MCF 10A (cell line): ENCODE measurements at regions of chr12 and their contacts with region 1.

Region 1: DNA sequence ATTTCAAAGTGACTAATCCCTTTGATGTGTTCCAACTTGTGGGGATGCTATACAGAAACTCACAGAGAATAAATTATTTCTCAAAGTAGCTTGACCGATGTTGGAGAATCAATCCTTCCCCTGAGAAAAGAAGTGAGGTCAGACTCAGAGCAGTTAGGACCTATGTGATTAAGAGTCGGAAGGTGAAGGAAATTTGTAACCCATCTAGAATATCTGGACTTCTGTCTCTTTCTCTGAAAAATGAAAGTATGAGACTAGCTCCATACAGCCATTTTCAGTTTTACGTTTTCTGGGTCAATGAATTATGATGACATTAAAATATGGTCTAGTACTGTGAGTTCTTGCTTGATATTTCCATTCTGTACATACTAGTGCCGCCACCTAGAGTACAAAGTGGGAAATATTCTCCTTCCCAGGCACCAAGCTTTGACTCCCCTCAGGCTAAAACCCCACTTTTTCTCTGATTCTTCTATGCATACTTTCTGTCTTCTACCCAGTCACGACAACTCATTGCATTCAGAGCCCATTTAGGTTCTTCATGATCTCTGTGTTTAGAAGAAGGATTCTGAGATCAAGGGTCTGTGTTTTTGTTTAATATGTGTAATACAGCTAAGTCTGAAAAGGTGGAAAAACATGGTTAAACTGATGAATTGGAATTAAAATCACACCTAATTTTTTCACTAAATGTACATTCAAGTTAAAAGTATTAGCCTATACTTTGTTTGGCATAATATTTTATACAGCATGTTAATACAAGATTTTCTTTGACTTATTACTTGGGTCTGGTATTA is 6.9 kb upstream of the NTS start:
- DNase-seq: peak; percentile 75
- H3K4me3 Mint-ChIP-seq: peak overlapping the region; percentile 15
- H3K27ac Mint-ChIP-seq: no peak overlapping the region
- H3K4me1 Mint-ChIP-seq: no peaks in the 10 kb centered on the region
- H3K27me3 Mint-ChIP-seq: no peaks in the 10 kb centered on the region
- CTCF ChIP-seq: peak; percentile 86

Region 2: DNA sequence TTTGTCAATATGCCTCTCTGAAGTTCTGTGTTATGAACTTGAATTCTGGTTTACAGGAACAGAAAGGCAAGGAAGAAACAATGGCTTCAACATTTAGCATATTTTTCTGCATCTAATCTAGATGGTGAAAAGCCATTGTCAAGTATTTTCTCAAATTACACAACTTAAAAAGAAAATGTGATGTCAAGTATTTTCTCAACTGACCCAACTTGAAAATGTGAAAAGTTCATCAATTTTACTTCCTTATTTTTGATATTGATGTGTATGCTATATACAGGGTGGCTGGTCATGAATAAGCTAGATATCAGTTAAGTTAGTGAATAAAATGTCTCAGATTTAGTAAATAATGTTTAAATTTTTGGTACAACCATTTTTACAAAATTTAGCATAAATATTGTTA is 390.4 kb before region 1 on chr12:
- CTCF ChIA-PET with region 1: interaction called, 51 read pairs
- POLR2A ChIA-PET with region 1: interaction called, 4 read pairs
- intact Hi-C with region 1: loop called (anchors 1 kb)
- DNase-seq: no peak
- H3K4me3 Mint-ChIP-seq: no peak overlapping the region
- H3K27ac Mint-ChIP-seq: no peak overlapping the region
- H3K4me1 Mint-ChIP-seq: no peaks in the 10 kb centered on the region
- H3K27me3 Mint-ChIP-seq: no peaks in the 10 kb centered on the region
- CTCF ChIP-seq: no peak

Region 3: GRCh38 chr12:85575120-85576096 is 291.8 kb before region 1 on chr12:
- CTCF ChIA-PET with region 1: interaction called, 204 read pairs
- POLR2A ChIA-PET with region 1: interaction called, 10 read pairs
- intact Hi-C with region 1: loop called (anchors 1 kb)
- DNase-seq: peak; percentile 79
- H3K4me3 Mint-ChIP-seq: no peak overlapping the region
- H3K27ac Mint-ChIP-seq: no peak overlapping the region
- H3K4me1 Mint-ChIP-seq: no peaks in the 10 kb centered on the region
- H3K27me3 Mint-ChIP-seq: no peaks in the 10 kb centered on the region
- CTCF ChIP-seq: peak; percentile 66

Region 4: GRCh38 chr12:85610194-85610593 is 257.0 kb before region 1 on chr12:
- CTCF ChIA-PET with region 1: no interaction called
- POLR2A ChIA-PET with region 1: no interaction called
- intact Hi-C with region 1: no loop called
- DNase-seq: no peak
- H3K4me3 Mint-ChIP-seq: no peak overlapping the region
- H3K27ac Mint-ChIP-seq: no peak overlapping the region
- H3K4me1 Mint-ChIP-seq: no peaks in the 10 kb centered on the region
- H3K27me3 Mint-ChIP-seq: no peaks in the 10 kb centered on the region
- CTCF ChIP-seq: no peak

Region 5: GRCh38 chr12:85657836-85658630 is 209.1 kb before region 1 on chr12:
- CTCF ChIA-PET with region 1: no interaction called
- POLR2A ChIA-PET with region 1: no interaction called
- intact Hi-C with region 1: no loop called
- DNase-seq: no peak
- H3K4me3 Mint-ChIP-seq: no peak overlapping the region
- H3K27ac Mint-ChIP-seq: no peak overlapping the region
- H3K4me1 Mint-ChIP-seq: no peaks in the 10 kb centered on the region
- H3K27me3 Mint-ChIP-seq: no peaks in the 10 kb centered on the region
- CTCF ChIP-seq: no peak

Region 6: GRCh38 chr12:85725991-85726390 is 141.2 kb before region 1 on chr12:
- CTCF ChIA-PET with region 1: interaction called, 4 read pairs
- POLR2A ChIA-PET with region 1: no interaction called
- intact Hi-C with region 1: loop called (anchors 10 kb)
- DNase-seq: peak; percentile 6
- H3K4me3 Mint-ChIP-seq: no peak overlapping the region
- H3K27ac Mint-ChIP-seq: no peak overlapping the region
- H3K4me1 Mint-ChIP-seq: no peaks in the 10 kb centered on the region
- H3K27me3 Mint-ChIP-seq: no peaks in the 10 kb centered on the region
- CTCF ChIP-seq: no peak

Region 7: GRCh38 chr12:85843606-85844285 is 23.4 kb before region 1 on chr12:
- CTCF ChIA-PET with region 1: interaction called, 22 read pairs
- POLR2A ChIA-PET with region 1: interaction called, 5 read pairs
- intact Hi-C with region 1: no loop called
- DNase-seq: no peak
- H3K4me3 Mint-ChIP-seq: no peak overlapping the region
- H3K27ac Mint-ChIP-seq: no peak overlapping the region
- H3K4me1 Mint-ChIP-seq: no peaks in the 10 kb centered on the region
- H3K27me3 Mint-ChIP-seq: no peaks in the 10 kb centered on the region
- CTCF ChIP-seq: no peak